ENCODE measurements at regions of chr1 and their contacts with region 1.

Region 1: DNA sequence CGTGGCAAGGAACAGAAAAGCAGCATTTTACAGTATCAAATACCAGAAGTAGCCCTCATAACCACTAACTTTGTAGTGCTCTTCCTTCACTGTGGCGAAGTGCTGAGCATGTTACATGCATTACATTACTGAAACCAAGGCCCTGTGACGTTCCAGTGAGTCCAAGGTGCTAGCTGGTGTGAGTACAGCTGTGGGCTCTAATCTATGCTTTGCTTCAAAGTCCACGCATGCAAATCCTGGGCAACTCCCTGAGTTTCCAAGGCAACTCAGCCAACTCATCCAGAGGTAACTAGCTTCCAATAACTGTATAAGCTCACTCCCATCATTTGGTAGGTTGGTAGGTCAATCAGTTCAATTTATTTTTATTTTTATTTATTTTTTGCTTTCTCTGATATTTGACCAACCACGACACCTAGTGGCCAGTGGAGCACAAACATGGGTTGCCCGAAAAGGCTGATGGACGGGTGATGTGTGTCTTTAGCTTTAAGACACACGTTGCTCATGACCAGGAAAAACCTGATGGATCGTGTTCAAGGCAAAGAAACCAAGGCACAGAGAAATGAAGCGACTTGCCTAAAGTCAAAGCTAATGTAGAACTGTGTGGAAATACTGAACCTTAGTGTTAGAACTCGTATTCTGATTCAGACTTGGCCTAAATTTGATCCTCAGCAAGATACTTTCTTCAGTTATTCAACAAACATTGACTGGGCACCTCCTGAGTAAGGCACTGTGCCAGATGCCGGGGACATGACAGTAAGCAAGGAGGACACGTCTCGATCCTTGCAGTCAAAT is 73.0 kb downstream of the GNG12 start:
- DNase-seq: peak in 2 of 3 donors; percentile 75 to 90
- ATAC-seq: peak; percentile 91
- H3K4me3 ChIP-seq: no peak overlapping the region
- H3K4me1 ChIP-seq: peaks cover 46% of the 10 kb centered on the region
- CTCF ChIP-seq: no peak

Region 2: GRCh38 chr1:67460676-67461500 is 299.3 kb before region 1 on chr1:
- intact Hi-C with region 1: no loop called
- DNase-seq: no peak
- ATAC-seq: no peak
- H3K4me3 ChIP-seq: no peak overlapping the region
- H3K4me1 ChIP-seq: no peaks in the 10 kb centered on the region
- CTCF ChIP-seq: no peak

Region 3: GRCh38 chr1:67535474-67535873 is 224.8 kb before region 1 on chr1:
- intact Hi-C with region 1: loop called (anchors 5 to 10 kb)
- DNase-seq: peak; percentile 81 to 89 (median 88)
- ATAC-seq: peak; percentile 92
- H3K4me3 ChIP-seq: no peak overlapping the region
- H3K4me1 ChIP-seq: peaks cover 13% of the 10 kb centered on the region
- CTCF ChIP-seq: peak; percentile 91

Region 4: GRCh38 chr1:67561704-67562113 is 198.5 kb before region 1 on chr1:
- intact Hi-C with region 1: loop called in 1 of 2 experiments (anchors 10 kb)
- DNase-seq: peak; percentile 92 to 99 (median 97)
- ATAC-seq: peak; percentile 93
- H3K4me3 ChIP-seq: no peak overlapping the region
- H3K4me1 ChIP-seq: no peaks in the 10 kb centered on the region
- CTCF ChIP-seq: peak; percentile 66

Region 5: GRCh38 chr1:67618285-67619018 is 141.8 kb before region 1 on chr1:
- intact Hi-C with region 1: no loop called
- DNase-seq: peak in 1 of 3 donors; percentile 54
- ATAC-seq: peak; percentile 65
- H3K4me3 ChIP-seq: no peak overlapping the region
- H3K4me1 ChIP-seq: no peaks in the 10 kb centered on the region
- CTCF ChIP-seq: no peak

Region 6: DNA sequence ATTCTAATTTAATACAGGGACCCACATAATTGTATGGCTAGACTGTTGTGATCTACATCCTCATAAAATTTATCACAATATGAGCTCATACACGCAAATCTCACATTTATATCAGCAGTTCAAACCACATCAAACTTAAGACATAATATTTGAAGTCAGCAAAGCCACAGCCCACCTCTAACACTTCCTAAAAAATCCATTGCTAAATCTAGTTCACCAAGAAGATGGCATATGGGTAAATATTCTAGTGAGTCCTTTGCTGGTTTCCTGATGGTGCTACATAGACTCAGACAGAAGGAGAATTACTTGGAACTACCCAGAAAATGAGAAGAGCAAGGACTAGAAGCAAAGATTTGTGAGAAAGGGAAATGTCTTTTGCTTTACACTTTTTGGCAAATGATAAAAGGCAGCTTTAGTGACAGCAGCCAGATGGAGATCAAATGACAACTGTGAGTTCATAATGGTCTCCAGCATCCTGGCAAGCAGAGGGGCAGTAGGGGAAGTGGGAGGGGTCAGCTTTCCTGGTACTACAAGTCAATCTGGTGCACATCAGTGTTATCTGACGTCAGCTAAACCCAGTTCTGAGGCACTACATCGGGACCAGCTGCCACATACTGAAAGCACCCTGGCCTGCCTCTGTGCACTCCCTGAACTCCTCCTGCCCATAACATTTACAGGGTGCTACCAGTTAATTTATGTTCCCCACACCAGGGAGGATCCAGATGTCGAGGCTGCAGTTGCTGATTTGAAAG is 85.8 kb before region 1 on chr1:
- intact Hi-C with region 1: no loop called
- DNase-seq: peak in 1 of 3 donors; percentile 31
- ATAC-seq: peak; percentile 70
- H3K4me3 ChIP-seq: no peak overlapping the region
- H3K4me1 ChIP-seq: no peaks in the 10 kb centered on the region
- CTCF ChIP-seq: no peak

Region 7: DNA sequence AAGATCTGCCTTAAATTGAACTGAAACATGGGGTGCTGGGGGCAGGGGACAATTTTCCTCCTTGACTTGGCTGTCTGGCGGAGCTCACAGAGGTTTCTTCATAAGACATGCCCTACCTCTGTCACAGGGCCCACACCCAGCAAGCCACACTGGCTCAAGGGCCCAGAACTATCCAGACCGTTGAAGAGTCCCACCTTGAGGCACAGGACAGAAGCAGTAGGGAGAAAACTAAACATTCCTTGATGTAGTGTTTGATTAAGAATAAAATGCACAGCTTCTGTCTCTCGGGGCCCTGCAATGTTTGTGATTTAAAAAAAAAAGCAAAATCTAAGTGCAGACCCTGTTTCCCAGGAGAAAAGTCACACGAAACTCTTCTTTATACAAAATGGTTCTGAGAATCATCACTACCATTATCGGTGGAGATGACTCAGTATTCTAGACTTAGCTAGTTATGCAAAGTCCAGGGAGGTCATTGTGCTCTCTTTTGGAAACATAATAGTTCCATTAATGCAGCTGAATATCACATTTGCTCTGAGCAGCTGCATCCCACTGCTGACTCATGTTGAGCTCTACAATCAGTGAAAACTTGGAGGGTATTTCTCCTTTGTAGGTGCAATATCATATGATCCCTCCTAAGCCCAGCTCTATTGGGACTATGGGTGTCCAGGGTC is 343.8 kb after region 1 on chr1:
- intact Hi-C with region 1: loop called in 1 of 2 experiments (anchors 10 kb)
- DNase-seq: no peak
- ATAC-seq: no peak
- H3K4me3 ChIP-seq: no peak overlapping the region
- H3K4me1 ChIP-seq: peaks cover 24% of the 10 kb centered on the region
- CTCF ChIP-seq: no peak

Region 8: GRCh38 chr1:68111519-68112436 is 351.6 kb after region 1 on chr1:
- intact Hi-C with region 1: loop called (anchors 5 to 10 kb)
- DNase-seq: peak; percentile 67 to 75 (median 72)
- ATAC-seq: peak; percentile 93
- H3K4me3 ChIP-seq: no peak overlapping the region
- H3K4me1 ChIP-seq: no peaks in the 10 kb centered on the region
- CTCF ChIP-seq: peak; percentile 29

Measured in mucosa of descending colon (tissue), 3 donors.